Endothelial cell of umbilical vein (primary cell): ENCODE measurements at regions of chr12 and their contacts with region 1.

Region 1: GRCh38 chr12:108562348-108563135 is at the start of gene ISCU:
- DNase-seq: peak; percentile 96
- H3K4me3 ChIP-seq: peak within 1 kb of the TSS; percentile 78 to 95 (median 86)
- H3K27ac ChIP-seq: peak within 1 kb of the TSS; percentile 83
- H3K4me1 ChIP-seq: peaks cover 34% of the 10 kb centered on the region
- H3K27me3 ChIP-seq: no peaks in the 10 kb centered on the region
- CTCF ChIP-seq: no peak
- POLR2A ChIP-seq: peak; percentile 94
- total RNA-seq, gene ISCU: 74.8 and 75.0 TPM in 2 replicates

Region 2: GRCh38 chr12:108618079-108618952 is 55.8 kb after region 1 on chr12:
- CTCF ChIA-PET with region 1: interaction called, 86 read pairs
- POLR2A ChIA-PET with region 1: no interaction called
- dilution Hi-C with region 1: no loop called
- intact Hi-C with region 1: loop called (anchors 1 kb)
- DNase-seq: peak; percentile 71
- H3K4me3 ChIP-seq: no peak overlapping the region
- H3K27ac ChIP-seq: no peak overlapping the region
- H3K4me1 ChIP-seq: peaks cover 13% of the 10 kb centered on the region
- H3K27me3 ChIP-seq: no peaks in the 10 kb centered on the region
- CTCF ChIP-seq: peak; percentile 92 to 96
- POLR2A ChIP-seq: no peak

Region 3: DNA sequence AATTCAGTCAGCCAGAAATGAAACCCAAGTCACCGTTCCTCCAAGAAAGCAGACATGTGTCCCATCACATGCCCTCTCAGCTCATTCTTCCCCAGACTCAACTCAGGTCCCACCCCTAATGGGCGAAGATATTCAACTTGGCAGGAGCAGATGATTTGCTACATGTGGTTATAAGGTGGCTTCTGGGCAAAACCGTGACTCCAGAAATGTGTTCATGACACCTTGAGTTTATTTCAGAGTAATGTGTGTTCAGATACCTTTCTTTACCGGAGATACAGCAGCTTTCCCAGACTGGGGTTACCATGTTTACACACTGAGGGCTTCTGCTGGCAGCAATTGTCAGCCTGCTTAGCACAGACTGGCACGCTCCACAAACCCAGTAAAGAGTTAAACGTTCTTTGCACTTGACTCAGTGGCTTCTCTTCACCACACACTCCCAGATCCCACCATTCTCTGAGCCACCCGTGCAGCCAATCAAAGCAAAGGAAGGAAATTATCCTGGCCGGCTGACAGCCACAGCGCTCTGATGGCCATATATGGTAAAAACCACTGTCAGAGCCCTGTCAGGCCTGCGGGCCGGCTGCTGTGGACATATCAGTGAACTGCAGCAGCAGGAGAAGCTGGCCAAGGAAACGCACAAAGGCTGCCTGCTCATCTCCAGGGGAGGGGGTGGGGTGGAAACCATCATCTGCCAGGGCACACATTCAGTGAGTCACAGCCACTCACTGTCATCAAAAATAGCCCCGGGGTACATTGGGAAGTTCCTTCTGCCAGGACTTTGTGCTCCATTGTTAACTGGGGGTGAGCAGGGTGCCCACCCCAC is 128.8 kb after region 1 on chr12:
- CTCF ChIA-PET with region 1: no interaction called
- POLR2A ChIA-PET with region 1: interaction called, 4 read pairs
- dilution Hi-C with region 1: no loop called
- intact Hi-C with region 1: loop called (anchors 2 kb)
- DNase-seq: peak; percentile 99
- H3K4me3 ChIP-seq: peak overlapping the region in 1 of 3 experiments; percentile 7
- H3K27ac ChIP-seq: peak overlapping the region; percentile 89
- H3K4me1 ChIP-seq: peaks cover 49% of the 10 kb centered on the region
- H3K27me3 ChIP-seq: no peaks in the 10 kb centered on the region
- CTCF ChIP-seq: peak in 1 of 2 donors; percentile 31
- POLR2A ChIP-seq: peak; percentile 56

Region 4: DNA sequence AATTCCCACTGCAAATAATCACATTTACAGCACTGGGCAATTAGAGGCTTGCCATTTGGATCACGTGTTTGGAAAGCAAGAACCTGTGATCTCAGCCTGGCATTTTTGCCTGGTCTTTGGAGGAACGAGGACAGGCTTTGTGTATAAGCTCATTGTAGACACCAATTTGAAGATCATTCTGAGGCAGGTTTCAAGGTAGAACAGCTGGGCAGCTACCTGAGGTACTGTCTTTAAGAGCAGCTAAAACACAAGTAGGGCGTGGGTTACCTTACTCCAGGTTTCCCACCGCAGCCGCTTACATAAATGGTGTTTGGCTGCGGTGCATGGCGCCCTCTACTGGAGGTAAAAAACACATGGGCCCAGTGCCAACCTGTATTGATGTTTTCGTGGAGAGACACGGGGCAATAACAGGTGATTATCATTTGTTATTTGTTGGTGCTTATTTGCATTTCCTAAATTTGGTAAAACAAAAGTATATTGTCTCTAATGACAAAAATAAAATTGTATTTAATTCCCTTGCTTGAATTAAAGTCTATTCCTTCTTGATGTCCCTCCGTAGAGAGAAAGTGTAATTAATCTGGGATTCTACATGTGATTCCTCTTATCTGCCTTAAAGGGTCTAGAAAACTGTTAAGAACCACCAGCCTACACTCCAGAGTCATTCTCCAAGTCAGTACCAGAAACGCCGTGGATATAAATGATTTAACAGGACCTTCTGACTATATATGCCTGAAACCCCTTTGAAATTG is 388.6 kb after region 1 on chr12:
- CTCF ChIA-PET with region 1: interaction called, 9 read pairs
- POLR2A ChIA-PET with region 1: no interaction called
- dilution Hi-C with region 1: no loop called
- intact Hi-C with region 1: loop called (anchors 1 kb)
- DNase-seq: peak; percentile 80
- H3K4me3 ChIP-seq: no peak overlapping the region
- H3K27ac ChIP-seq: no peak overlapping the region
- H3K4me1 ChIP-seq: no peaks in the 10 kb centered on the region
- H3K27me3 ChIP-seq: no peaks in the 10 kb centered on the region
- CTCF ChIP-seq: peak; percentile 74 to 80
- POLR2A ChIP-seq: no peak

Region 5: GRCh38 chr12:109093022-109093918 is 530.7 kb after region 1 on chr12 and contains the start of gene ALKBH2:
- CTCF ChIA-PET with region 1: interaction called, 6 read pairs
- POLR2A ChIA-PET with region 1: interaction called, 3 read pairs
- dilution Hi-C with region 1: no loop called
- intact Hi-C with region 1: loop called (anchors 1 kb)
- DNase-seq: peak; percentile 89
- H3K4me3 ChIP-seq: peak within 1 kb of the TSS in 2 of 3 experiments; percentile 33 to 41
- H3K27ac ChIP-seq: peak within 1 kb of the TSS; percentile 43
- H3K4me1 ChIP-seq: peaks cover 7% of the 10 kb centered on the region
- H3K27me3 ChIP-seq: no peaks in the 10 kb centered on the region
- CTCF ChIP-seq: peak; percentile 99 to 100
- POLR2A ChIP-seq: peak; percentile 67
- total RNA-seq, gene ALKBH2: 5.4 TPM in 2 replicates